ENCODE measurements at regions of chr9 and their contacts with region 1.

Region 1: DNA sequence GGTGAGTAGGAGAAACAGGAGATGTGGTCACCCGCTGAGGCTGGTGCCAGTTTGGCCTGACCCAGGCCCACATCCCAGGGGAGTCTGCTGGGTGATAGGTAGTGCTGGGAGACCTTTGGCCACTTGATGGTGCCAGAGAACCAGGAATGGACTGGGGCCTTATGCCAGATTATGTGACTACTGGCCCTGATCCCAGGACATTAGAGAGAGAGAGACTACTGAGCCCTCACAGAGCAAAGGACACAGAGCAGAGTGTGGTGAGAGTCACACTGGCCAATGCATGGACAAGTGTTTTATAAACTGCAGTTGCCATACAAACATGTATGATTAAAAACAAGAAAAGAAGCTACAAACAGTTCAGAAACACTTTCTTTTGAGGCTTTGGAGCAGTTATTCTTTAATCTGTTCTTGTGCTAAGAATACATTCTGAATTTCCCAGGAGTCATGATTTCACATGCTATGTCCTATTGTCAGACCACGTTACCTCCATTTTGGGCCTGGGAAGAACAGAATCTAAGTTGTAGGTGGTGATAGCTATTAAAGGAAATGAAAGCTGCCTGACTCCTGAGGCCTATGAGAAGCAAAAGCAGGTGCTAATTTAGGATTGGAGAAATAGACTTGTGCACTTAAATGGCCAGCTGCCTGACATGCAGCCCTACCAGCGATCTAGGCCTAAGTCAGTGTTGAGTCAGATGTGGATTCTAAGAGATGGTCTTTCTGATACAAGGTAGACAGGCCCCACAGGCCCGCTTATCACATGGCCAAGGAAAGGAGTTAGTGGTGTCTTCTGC is 32.6 kb upstream of the TMOD1 start:
- DNase-seq: peak; percentile 77
- H3K4me3 ChIP-seq: no peak overlapping the region
- H3K27ac ChIP-seq: no peak overlapping the region
- H3K4me1 ChIP-seq: no peaks in the 10 kb centered on the region
- H3K27me3 ChIP-seq: no peaks in the 10 kb centered on the region
- CTCF ChIP-seq: peak; percentile 79 to 81
- POLR2A ChIP-seq: no peak

Region 2: DNA sequence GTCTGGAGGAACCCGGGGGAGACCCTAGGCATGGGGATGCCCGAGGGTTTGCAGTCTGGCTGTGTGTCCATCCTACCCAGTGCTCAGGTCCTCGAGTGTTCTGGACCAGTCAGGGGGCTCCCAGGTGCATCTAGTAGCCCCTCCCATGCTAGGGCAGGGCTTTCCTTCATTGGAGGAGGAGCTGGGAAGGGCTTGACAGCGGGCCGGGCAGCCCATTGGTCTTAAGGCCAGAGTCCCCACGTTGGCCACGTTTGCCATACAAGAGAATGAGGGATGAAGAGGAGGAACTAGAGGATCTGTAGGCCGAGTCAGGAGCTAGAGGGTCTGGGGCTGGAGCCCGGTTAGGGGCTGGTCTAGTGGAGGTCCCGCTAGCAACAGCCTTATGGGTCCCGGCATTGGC is 392.6 kb before region 1 on chr9:
- CTCF ChIA-PET with region 1: no interaction called
- POLR2A ChIA-PET with region 1: no interaction called
- dilution Hi-C with region 1: no loop called
- intact Hi-C with region 1: no loop called
- DNase-seq: no peak
- H3K4me3 ChIP-seq: no peak overlapping the region
- H3K27ac ChIP-seq: no peak overlapping the region
- H3K4me1 ChIP-seq: peaks cover 2% of the 10 kb centered on the region
- H3K27me3 ChIP-seq: peaks cover 0 to 2% of the 10 kb centered on the region in 2 experiments
- CTCF ChIP-seq: no peak
- POLR2A ChIP-seq: no peak

Region 3: DNA sequence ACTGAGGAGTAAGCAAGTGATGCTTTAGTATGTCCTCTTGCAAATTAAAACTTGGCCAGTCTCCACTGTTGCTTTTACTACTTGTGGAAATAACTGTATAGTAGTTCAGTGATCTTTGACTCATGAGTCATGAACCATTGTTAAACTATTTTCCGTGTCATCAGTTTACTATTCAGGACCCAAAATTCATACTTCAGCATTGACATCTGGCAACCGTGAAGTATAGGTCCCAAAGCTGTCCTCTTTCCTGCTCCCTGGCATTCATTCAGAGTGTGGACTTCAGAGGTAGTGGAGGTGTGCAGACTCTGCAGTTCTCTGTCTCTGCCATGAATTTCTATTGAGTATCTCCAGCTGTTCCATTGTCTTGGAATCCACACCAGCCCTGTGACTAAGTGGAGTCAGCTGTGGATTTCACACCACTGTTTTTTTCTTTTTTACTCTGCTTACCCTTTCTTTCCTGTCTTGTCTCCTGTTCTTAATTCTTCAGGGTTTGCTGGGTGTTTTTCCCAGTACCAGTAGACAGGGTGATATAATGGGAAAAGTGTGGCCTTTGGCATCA is 49.5 kb before region 1 on chr9:
- CTCF ChIA-PET with region 1: interaction called, 12 read pairs
- POLR2A ChIA-PET with region 1: no interaction called
- dilution Hi-C with region 1: no loop called
- intact Hi-C with region 1: no loop called
- DNase-seq: peak; percentile 83
- H3K4me3 ChIP-seq: no peak overlapping the region
- H3K27ac ChIP-seq: peak overlapping the region; percentile 1
- H3K4me1 ChIP-seq: peaks cover 17% of the 10 kb centered on the region
- H3K27me3 ChIP-seq: no peaks in the 10 kb centered on the region
- CTCF ChIP-seq: no peak
- POLR2A ChIP-seq: no peak

Region 4: GRCh38 chr9:97479496-97480159 is 10.8 kb after region 1 on chr9:
- CTCF ChIA-PET with region 1: interaction called, 32 read pairs
- POLR2A ChIA-PET with region 1: no interaction called
- dilution Hi-C with region 1: no loop called
- intact Hi-C with region 1: no loop called
- DNase-seq: no peak
- H3K4me3 ChIP-seq: no peak overlapping the region
- H3K27ac ChIP-seq: no peak overlapping the region
- H3K4me1 ChIP-seq: no peaks in the 10 kb centered on the region
- H3K27me3 ChIP-seq: no peaks in the 10 kb centered on the region
- CTCF ChIP-seq: no peak
- POLR2A ChIP-seq: no peak

Region 5: DNA sequence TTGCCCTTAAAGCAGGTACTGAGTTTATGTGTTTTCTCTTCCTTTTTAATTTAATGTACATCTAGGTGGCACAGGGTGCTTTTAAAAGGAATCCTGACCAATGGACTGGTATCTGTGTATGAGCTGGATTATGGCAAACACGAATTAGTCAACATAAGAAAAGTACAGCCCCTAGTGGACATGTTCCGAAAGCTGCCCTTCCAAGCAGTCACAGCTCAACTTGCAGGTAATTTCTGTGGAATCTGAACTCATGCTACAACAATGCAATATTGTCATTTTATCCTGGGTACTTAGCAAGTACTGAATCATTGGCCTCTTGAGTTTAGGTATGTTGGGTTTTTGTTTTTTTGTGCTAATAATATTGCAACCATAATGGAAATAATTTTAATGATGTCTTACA is 18.3 kb after region 1 on chr9:
- CTCF ChIA-PET with region 1: interaction called, 32 read pairs
- POLR2A ChIA-PET with region 1: no interaction called
- dilution Hi-C with region 1: no loop called
- intact Hi-C with region 1: no loop called
- DNase-seq: no peak
- H3K4me3 ChIP-seq: no peak overlapping the region
- H3K27ac ChIP-seq: no peak overlapping the region
- H3K4me1 ChIP-seq: no peaks in the 10 kb centered on the region
- H3K27me3 ChIP-seq: no peaks in the 10 kb centered on the region
- CTCF ChIP-seq: peak; percentile 26 to 27
- POLR2A ChIP-seq: no peak

Region 6: DNA sequence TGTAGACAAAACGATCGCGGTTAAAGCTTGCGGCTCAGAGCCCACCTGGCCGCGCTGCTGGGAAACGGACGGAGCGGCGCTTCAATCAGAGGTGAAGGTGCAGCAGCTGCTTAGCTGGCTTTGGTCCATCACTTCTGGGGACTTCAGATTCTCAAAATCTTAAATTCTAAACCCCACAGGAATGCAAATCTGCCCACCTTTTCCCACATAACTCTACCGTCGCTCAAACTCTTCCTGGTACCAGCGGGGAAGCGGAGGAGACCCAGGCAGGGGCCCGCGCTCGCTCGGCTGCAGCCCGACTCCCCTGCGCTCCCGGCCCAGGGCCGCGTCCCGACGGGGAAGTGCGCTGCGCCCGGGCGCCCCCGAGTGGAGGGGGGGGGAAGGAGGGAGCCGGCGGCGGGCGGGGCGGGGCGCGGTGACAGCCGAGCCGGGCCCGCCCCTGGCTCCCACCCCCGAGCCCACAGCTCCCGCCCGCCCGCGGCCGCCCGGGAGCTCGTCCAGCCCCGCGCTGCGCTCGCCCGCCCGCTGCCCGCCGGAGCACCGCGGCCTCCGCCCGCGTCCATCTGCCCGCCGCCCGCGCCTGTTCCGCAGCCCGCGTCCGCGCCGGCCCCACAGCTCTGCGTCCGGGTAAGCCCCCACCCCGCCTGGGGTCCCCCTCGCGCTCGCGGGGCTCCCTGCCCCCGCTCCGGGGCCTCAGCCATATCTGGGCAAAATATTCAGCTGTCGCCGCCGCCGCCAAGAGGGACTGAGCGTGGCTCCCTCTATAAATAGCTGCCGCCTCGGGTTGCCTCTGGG is 32.5 kb after region 1 on chr9 and contains the start of gene TMOD1:
- CTCF ChIA-PET with region 1: interaction called, 19 read pairs
- POLR2A ChIA-PET with region 1: no interaction called
- dilution Hi-C with region 1: no loop called
- intact Hi-C with region 1: no loop called
- DNase-seq: peak; percentile 55
- H3K4me3 ChIP-seq: peak within 1 kb of the TSS; percentile 44 to 62 (median 52)
- H3K27ac ChIP-seq: no peak within 1 kb of the TSS
- H3K4me1 ChIP-seq: peaks cover 7% of the 10 kb centered on the region
- H3K27me3 ChIP-seq: peaks cover 46 to 65% of the 10 kb centered on the region in 2 experiments
- CTCF ChIP-seq: no peak
- POLR2A ChIP-seq: no peak
- total RNA-seq, gene TMOD1: 0.74 and 1.4 TPM in 2 replicates

Measured in endothelial cell of umbilical vein (primary cell).